MCF 10A (cell line): ENCODE measurements at regions of chr7 and their contacts with region 1.

Region 1: DNA sequence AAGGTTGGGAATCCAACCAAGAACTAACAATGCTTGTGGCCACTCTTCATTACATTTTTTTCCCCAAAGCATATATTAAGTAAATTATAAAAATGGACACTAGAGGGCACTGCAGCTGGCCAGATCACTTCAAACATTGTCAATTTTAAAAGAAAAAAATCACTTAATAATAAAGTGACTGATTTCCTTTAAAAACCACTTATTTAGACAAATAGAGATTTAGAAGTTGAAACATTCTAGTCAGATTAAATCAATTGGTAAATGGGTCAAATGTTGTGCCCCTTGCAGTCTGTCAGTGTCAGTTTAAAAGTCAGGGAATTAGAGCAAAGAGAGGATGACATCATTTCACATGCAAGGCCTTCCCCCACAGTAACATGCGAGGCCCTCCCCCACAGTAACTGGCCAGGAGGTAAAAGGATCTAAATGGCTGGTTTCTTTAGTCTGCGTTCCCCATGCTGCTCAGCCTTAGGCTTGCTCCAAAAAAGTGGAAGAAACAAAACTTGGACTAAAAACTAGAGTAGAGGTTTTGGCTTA is 177.9 kb downstream of the SKAP2 start:
- DNase-seq: peak; percentile 51
- H3K4me3 Mint-ChIP-seq: no peak overlapping the region
- H3K27ac Mint-ChIP-seq: no peak overlapping the region
- H3K4me1 Mint-ChIP-seq: peaks cover 3% of the 10 kb centered on the region
- H3K27me3 Mint-ChIP-seq: no peaks in the 10 kb centered on the region
- CTCF ChIP-seq: peak; percentile 59

Region 2: GRCh38 chr7:26843705-26844104 is 157.2 kb after region 1 on chr7:
- CTCF ChIA-PET with region 1: interaction called, 6 read pairs
- POLR2A ChIA-PET with region 1: interaction called, 3 read pairs
- intact Hi-C with region 1: loop called (anchors 2 kb)
- DNase-seq: peak; percentile 38
- H3K4me3 Mint-ChIP-seq: no peak overlapping the region
- H3K27ac Mint-ChIP-seq: no peak overlapping the region
- H3K4me1 Mint-ChIP-seq: no peaks in the 10 kb centered on the region
- H3K27me3 Mint-ChIP-seq: no peaks in the 10 kb centered on the region
- CTCF ChIP-seq: peak; percentile 45

Region 3: DNA sequence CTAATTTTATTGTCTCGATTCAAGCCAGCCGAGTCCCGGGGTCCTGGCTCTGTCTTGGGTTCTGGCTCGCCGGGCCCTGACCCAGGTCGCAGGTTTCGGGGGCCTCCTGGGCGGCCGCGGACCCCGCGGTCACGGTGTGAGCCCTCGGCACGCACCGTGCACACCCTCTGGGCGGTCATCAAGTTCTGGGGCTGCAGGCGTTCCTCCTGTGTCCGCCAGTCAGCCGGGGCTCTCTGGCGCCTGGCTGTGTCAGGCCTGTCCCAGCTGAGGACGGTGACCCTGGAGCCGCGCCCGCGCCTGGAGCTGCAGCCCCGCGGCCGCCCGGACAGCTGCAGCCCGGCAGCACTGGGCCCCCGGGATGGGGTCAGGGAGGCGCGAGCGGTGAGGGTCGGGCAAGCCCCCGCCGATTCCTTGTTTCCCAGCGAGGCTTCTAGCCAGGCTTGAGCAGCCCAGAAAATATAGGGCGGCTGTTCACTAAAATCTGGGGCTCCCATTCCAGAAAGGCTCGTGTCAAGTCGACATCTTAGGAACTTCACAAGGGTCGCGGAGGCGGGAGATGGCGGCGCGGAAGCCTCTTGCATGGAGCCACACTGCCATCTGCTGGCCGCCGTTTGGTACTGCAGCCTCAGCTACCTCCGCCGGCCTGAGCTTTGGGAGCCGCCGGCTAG is 474.2 kb after region 1 on chr7:
- CTCF ChIA-PET with region 1: interaction called, 54 read pairs
- POLR2A ChIA-PET with region 1: interaction called, 6 read pairs
- intact Hi-C with region 1: loop called (anchors 1 kb)
- DNase-seq: peak; percentile 83
- H3K4me3 Mint-ChIP-seq: peak overlapping the region; percentile 84
- H3K27ac Mint-ChIP-seq: no peak overlapping the region
- H3K4me1 Mint-ChIP-seq: peaks cover 8% of the 10 kb centered on the region
- H3K27me3 Mint-ChIP-seq: no peaks in the 10 kb centered on the region
- CTCF ChIP-seq: peak; percentile 96